Left ventricle myocardium superior (tissue), 1 donor: ENCODE measurements at regions of chr3 and their contacts with region 1.

Region 1: GRCh38 chr3:36893137-36893557 is 51.7 kb downstream of the TRANK1 start:
- DNase-seq: no peak
- ATAC-seq: peak; percentile 84

Region 2: DNA sequence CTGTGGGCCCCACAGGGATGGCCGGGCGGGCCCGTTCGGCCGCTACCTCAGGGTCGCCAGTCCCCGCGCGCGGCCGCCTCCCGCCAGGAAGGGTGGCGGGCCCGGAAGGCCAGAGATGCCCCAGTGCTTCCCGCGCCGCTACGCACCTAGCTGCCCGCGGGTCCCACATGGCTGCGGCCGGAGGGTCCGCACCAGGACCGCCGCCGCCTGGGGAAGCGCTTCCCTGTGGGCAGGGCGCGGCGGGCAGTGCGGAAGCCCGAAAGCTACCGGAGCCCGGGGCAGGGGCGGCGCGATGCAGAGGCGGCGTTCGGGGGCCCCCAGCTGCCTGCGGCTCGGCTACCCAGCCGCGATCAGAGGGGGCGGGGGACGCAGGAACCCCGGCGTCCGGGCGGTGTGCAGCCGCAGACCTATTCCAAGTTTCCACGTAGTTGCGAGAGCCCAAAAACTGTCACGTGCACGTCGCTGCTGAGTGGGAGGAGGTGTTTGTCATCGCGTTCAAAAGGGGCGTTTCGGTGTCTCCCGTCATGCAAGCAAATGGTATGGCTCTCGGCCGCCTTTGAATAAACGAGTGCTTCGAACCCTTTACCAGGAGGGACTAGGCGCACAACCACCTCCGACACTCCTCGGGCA is 51.6 kb after region 1 on chr3 and contains the start of gene TRANK1:
- intact Hi-C with region 1: loop called (anchors 5 kb)
- DNase-seq: peak; percentile 74
- ATAC-seq: peak; percentile 77
- total RNA-seq, gene TRANK1: 6.6 TPM